ENCODE measurements at regions of chr20 and their contacts with region 1.

Region 1: DNA sequence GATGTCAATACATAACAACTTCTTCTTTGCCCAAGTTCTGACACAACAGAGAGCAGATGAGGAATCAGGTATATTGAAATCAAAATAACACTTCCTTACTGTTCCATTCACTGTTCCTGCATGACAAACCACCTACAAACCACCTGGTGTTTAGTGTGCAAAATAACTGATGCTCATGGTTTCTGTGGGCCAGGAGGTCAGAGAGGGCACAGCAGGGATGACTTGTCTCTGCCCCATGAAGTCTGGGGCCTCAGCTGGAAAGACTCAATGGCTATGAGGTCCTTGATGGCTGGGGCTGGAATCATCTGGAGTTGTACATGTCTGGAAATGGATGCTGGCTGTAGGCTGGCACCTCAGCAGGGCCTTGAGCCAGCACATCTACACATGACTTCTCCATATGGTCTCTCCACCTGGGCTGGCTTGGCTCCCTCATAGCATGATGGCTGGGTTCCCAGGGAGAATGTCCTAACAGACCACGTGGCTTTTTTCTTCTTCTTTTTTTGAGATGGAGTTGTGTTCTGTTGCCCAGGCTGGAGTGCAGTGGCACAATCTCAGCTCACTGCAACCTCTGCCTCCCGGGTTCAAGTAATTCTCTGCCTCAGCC is 7.4 kb upstream of the COX4I2 start:
- DNase-seq: no peak
- ATAC-seq: no peak
- H3K4me3 ChIP-seq: no peak overlapping the region
- H3K27ac ChIP-seq: no peak overlapping the region
- H3K4me1 ChIP-seq: peaks cover 0 to 6% of the 10 kb centered on the region in 2 experiments; a peak in 1 of 4 replicates
- H3K27me3 ChIP-seq: no peaks in the 10 kb centered on the region
- CTCF ChIP-seq: no peak
- POLR2A ChIP-seq: no peak
- RAD21 ChIP-seq: no peak

Region 2: DNA sequence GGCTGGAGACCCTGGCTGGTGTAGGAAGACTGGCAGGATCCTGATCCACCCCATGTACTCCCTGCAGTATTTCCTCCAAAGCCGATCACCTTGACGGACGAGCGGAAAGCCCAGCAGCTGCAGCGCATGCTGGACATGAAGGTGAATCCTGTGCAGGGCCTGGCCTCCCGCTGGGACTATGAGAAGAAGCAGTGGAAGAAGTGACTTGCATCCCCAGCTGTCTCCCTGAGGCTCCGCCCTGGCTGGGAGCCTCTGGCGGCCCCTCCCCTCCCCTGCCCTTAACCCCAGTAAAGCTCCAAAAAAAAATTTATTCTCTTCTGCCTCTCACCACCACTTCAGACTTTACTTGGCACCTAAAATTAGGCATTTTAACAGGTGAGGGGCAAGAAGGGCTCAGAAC is 14.4 kb after region 1 on chr20:
- CTCF ChIA-PET with region 1: interaction called, 11 read pairs
- POLR2A ChIA-PET with region 1: interaction called, 5 read pairs
- RAD21 ChIA-PET with region 1: no interaction called
- intact Hi-C with region 1: no loop called
- DNase-seq: no peak
- ATAC-seq: peak; percentile 78
- H3K4me3 ChIP-seq: no peak overlapping the region; a peak in 1 of 4 replicates
- H3K27ac ChIP-seq: no peak overlapping the region; the same call in 1 of the 2 replicates
- H3K4me1 ChIP-seq: peaks cover 15 to 44% of the 10 kb centered on the region in 2 experiments
- H3K27me3 ChIP-seq: no peaks in the 10 kb centered on the region
- CTCF ChIP-seq: no peak
- POLR2A ChIP-seq: no peak
- RAD21 ChIP-seq: no peak

Region 3: DNA sequence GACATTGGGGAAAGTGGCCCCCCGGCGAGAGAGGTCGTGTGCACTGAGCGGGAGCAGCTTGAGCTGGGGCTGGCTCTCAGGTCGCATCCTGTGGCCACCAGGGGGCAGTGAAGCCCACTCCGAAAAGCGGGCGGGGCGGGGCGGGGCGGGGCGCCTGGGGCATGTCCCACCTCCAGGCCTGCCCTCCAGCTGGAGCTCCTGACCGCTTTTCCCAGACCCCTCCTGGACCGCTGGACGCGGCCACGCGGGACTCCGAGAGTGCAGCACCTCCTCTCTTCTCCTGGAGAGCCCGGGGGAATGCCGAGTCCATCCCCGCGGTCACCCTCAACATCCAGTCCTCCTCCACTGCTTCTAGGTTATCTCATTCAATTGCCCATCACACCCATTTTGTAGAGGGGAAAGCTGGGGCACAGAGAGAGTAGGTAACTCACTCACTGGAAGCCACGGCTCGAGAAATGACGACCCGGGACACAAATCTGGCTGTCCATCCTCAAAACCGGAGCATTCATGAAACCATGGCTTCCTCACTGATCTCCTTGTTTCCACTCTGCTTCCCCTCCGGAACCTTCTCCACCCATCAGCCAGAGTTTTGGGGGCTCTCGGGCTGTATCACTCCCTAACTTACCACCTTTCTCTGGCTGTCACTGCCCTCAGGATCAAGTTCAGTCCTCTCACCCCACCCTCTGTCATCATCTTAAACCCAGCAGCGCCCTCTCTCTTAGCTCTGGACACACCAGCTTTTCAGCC is 31.5 kb after region 1 on chr20:
- CTCF ChIA-PET with region 1: interaction called, 28 read pairs
- POLR2A ChIA-PET with region 1: interaction called, 6 read pairs
- RAD21 ChIA-PET with region 1: interaction called in 1 of 2 experiments, 8 read pairs
- intact Hi-C with region 1: no loop called
- DNase-seq: peak; percentile 40
- ATAC-seq: peak; percentile 75
- H3K4me3 ChIP-seq: peak overlapping the region; percentile 2 to 12; a peak in 2 of 4 replicates
- H3K27ac ChIP-seq: peak overlapping the region; percentile 53
- H3K4me1 ChIP-seq: peaks cover 43 to 62% of the 10 kb centered on the region in 2 experiments
- H3K27me3 ChIP-seq: no peaks in the 10 kb centered on the region
- CTCF ChIP-seq: peak; percentile 60 to 71 (median 67)
- POLR2A ChIP-seq: no peak
- RAD21 ChIP-seq: peak; percentile 72